K562 (cell line): ENCODE measurements at regions of chr1 and their contacts with region 1.

Region 1: DNA sequence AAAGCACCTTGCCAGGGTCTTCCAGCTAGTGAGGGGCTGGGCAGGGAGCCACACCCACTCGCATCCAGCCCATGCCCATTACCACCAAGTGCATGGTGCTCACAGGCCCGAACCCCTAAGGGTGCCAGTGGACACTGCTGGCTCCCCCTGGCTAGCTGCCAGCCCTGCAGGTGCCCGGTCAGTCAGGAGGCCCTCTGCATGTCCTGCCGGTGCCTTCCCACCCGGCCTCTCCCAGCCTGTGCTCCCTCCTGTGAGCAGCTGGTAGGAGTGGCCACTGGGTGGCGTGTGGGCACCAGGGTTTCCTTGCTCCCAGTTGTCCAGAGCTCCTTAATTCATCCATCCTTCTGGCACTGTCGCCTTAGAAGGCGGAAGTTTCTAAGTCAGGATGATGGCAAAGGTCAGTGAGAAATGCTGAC is 33.4 kb downstream of the QSOX1 start:
- DNase-seq: peak; percentile 68 to 77 (median 74)
- ATAC-seq: peak; percentile 90
- H3K4me3 ChIP-seq: no peak overlapping the region
- H3K27ac ChIP-seq: no peak overlapping the region
- H3K4me1 ChIP-seq: peaks cover 0 to 16% of the 10 kb centered on the region in 2 experiments; a peak in 3 of 5 replicates
- H3K27me3 ChIP-seq: no peaks in the 10 kb centered on the region
- CTCF ChIP-seq: peak; percentile 81 to 91 (median 84)
- EP300 ChIP-seq: no peak
- POLR2A ChIP-seq: no peak
- RAD21 ChIP-seq: peak; percentile 63 to 82

Region 2: DNA sequence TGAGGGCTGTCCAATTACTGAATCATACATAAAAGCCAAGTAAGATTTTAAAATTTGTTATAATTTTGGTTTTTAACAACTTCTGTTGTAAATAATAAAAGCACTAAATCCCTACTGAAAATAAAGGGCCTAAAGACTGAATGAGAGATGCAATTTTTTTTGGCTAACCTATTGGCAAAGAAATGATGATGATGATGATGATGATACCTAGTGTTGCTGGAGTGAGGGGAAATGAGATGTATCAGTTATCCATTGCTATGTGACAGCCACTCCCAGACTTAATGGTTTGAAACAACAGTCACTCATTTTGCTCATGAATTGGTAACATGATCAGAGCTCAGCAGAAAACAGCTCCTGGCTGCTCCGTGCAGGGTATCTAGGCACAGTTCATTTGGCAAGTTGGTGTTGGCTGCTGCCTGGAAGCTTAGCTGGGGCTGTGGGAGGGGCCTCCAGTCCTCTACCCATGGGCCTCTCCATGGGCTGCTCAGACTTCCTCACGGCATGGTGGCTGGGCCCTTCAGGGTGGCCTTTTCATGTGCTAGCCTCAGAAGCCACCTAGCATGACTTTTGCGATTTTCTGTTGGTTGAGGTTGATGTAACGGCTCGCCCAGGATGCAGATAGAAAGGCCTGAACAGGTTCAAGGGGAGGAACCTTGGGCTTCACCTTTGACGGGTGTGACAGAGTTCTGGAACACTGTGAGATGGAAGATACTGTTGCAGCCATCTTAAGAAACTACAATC is 16.0 kb after region 1 on chr1:
- CTCF ChIA-PET with region 1: no interaction called
- POLR2A ChIA-PET with region 1: no interaction called
- in situ Hi-C with region 1: no loop called
- intact Hi-C with region 1: no loop called
- DNase-seq: no peak
- ATAC-seq: peak; percentile 49
- H3K4me3 ChIP-seq: no peak overlapping the region
- H3K27ac ChIP-seq: no peak overlapping the region
- H3K4me1 ChIP-seq: peaks cover 0 to under 1% of the 10 kb centered on the region in 2 experiments; a peak in 1 of 5 replicates
- H3K27me3 ChIP-seq: no peaks in the 10 kb centered on the region
- CTCF ChIP-seq: no peak
- EP300 ChIP-seq: no peak
- POLR2A ChIP-seq: no peak
- RAD21 ChIP-seq: no peak

Region 3: DNA sequence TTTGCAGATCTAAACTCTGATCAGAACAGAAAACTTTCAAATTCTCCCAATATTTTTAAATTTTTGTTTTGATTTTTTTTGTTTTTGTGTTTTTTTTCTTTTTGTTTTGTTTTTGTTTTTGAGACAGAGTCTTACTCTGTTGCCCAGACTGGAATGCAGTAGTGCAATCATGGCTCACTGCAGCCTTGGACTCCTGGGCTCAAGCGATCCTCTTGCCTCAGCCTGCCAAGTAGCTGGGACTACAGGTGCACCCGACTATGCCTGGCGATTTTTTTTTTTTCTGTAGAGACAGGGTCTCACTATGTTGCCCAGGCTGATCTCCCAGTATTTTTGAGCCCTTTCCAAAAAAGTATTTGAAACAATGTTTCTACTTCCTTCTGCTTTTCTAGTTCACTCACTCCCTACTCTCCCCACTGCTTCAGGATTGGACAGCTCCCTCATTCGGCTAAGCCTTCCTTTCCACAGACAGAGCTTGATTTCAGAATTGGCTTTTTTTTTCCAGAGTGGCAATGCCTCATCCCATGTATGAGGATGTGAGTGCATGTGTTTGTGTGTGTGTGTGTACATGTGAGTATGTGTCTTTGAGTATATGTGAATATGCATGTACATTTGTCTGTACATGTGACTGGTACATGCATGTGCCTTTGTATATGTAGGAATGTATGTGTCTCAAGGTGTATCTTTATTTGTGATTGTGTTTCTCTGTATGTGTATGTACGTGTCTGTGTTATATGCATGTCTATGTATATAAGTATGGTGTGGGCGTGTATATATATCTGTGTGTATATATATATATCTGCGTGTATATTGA is 53.8 kb after region 1 on chr1:
- CTCF ChIA-PET with region 1: no interaction called
- POLR2A ChIA-PET with region 1: no interaction called
- in situ Hi-C with region 1: loop called (anchors 5 kb)
- intact Hi-C with region 1: loop called (anchors 1 kb)
- DNase-seq: peak in 3 of 4 experiments; percentile 42 to 49 (median 45)
- ATAC-seq: peak; percentile 59
- H3K4me3 ChIP-seq: no peak overlapping the region
- H3K27ac ChIP-seq: no peak overlapping the region
- H3K4me1 ChIP-seq: no peaks in the 10 kb centered on the region
- H3K27me3 ChIP-seq: peaks cover 37 to 43% of the 10 kb centered on the region in 2 experiments
- CTCF ChIP-seq: no peak
- EP300 ChIP-seq: no peak
- POLR2A ChIP-seq: no peak
- RAD21 ChIP-seq: no peak

Region 4: DNA sequence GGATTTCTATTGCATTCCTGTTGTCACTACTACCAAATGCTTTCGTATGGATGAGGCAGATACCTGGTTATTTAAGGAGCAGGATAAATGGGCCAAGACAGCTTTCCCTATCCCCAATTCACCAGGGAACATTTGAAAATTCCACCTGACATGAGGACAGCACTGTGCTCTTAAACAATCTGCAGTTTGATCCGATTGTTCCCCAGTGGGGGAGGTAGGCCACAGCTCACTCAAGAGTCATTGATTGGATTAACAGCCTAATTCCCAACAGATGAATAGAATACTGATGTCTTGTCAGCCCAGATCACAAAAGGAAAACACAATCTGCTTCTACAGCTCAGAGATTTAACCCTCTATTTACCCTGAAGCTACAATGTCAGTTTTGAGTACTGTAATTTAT is 165.8 kb after region 1 on chr1:
- CTCF ChIA-PET with region 1: no interaction called
- POLR2A ChIA-PET with region 1: no interaction called
- in situ Hi-C with region 1: no loop called
- intact Hi-C with region 1: loop called (anchors 5 kb)
- DNase-seq: no peak
- ATAC-seq: no peak
- H3K4me3 ChIP-seq: no peak overlapping the region
- H3K27ac ChIP-seq: no peak overlapping the region
- H3K4me1 ChIP-seq: no peaks in the 10 kb centered on the region
- H3K27me3 ChIP-seq: no peaks in the 10 kb centered on the region
- CTCF ChIP-seq: no peak
- EP300 ChIP-seq: no peak
- POLR2A ChIP-seq: no peak
- RAD21 ChIP-seq: no peak

Region 5: DNA sequence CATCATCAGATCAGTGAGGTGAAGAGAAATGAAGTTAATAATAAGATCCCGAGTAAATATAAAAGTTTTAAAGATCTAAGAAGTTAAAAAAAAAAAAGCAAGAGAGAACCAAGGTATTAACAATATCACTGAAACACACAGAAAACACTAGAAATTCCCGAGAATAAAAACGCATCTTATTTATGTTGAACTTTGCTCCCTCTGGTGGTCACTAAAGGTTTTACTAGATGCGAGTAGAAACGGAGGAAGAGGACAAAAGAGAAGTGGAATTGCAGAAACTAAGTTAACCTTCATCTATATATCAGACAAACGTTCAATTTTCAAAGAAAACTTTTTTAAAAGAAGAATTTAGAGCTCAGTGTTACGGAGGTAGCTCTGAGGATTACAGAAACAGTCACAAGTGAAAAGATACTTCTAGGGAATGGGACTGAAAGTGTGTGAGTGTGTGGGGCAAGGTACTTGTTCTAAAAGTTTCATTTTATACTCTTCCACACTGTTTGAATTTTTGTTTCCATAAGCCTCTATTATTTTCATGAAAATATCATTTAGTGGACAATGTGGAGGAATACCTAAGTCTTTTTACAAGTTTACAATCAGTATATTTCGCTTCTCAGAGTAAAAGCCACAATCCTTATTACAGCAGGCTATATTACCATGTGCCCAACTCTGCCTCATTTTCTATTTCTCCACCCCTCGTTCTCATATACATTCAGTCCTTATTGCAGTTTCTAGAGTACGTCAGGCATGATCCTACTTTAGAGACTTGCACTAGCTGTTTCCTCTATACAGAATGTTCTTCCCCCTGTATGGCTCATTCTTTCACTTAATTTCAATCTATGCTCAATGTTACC is 294.6 kb after region 1 on chr1:
- CTCF ChIA-PET with region 1: interaction called, 8 read pairs
- POLR2A ChIA-PET with region 1: interaction called, 3 read pairs
- in situ Hi-C with region 1: loop called (anchors 10 kb)
- intact Hi-C with region 1: loop called (anchors 2 kb)
- DNase-seq: peak; percentile 53 to 79 (median 54)
- ATAC-seq: peak; percentile 78
- H3K4me3 ChIP-seq: no peak overlapping the region
- H3K27ac ChIP-seq: no peak overlapping the region
- H3K4me1 ChIP-seq: no peaks in the 10 kb centered on the region
- H3K27me3 ChIP-seq: no peaks in the 10 kb centered on the region
- CTCF ChIP-seq: peak; percentile 64 to 82 (median 73); a peak in 5 of 6 replicates
- EP300 ChIP-seq: no peak
- POLR2A ChIP-seq: no peak
- RAD21 ChIP-seq: peak; percentile 49 to 64; a peak in 3 of 4 replicates